ENCODE measurements at regions of chr12 and their contacts with region 1.

Region 1: DNA sequence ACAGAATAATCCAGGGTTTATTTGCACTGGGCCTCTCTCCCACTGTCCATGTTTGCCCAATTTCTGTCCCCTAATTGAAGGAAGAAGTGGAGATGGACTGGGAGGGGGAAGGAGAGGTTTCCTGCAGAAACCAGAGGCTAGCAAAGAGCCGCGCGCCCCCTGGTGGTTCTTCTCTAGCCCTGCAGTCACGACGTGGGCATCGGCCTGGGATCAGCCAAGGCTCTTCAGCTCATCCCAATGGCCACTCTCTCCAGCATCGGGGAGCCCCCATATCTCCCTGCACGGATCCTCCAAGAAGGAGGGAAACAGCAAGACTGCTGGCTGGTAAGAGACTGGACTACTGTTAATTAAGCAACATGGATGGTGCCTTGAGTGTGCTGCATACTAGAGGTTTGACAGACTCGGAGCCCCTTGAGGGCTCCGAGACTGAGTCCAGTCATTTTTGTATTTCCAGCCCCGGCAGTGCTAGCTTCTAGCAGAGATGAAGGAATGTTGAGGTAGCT is 18.7 kb downstream of the ZBTB39 start:
- DNase-seq: peak; percentile 58
- H3K4me3 ChIP-seq: no peak overlapping the region
- H3K27ac ChIP-seq: no peak overlapping the region
- H3K4me1 ChIP-seq: peaks cover 18% of the 10 kb centered on the region
- H3K27me3 ChIP-seq: no peaks in the 10 kb centered on the region
- CTCF ChIP-seq: peak; percentile 94 to 95

Region 2: DNA sequence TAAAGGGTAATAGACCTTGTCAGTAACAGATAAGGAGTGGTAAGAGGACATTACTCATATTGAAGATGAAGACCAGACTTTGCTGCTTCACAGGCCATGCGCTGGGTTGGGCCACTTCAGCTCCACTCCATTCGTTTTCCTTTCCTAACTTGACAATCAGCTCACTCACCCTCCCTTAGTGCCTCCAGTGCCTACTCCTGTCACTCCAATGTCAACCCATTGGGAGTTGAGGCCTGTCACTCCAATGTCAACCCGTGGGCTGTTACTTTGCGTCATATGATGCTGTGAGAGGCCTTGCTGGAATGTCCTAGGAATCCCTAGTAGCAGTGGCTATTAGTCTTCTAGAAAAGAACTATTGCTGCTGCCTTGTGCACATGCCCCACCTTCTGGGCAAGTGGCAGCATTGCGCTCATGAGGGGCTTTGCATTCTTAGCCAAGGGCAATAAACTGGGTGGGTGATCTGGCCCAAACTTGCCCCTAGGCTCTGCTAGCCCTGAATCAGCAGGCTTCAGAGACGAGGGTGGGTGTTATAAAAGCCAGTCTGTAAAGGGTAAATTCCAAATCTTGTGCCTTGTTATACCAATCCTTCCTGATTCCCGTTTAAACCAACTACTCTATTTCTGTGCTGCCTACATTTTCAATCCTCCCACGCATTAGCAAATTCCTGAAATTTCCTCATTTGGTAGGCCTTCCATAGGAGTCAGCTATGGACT is 393.5 kb before region 1 on chr12:
- CTCF ChIA-PET with region 1: no interaction called
- dilution Hi-C with region 1: no loop called
- in situ Hi-C with region 1: no loop called
- intact Hi-C with region 1: no loop called
- DNase-seq: peak; percentile 59
- H3K4me3 ChIP-seq: no peak overlapping the region
- H3K27ac ChIP-seq: peak overlapping the region; percentile 9
- H3K4me1 ChIP-seq: peaks cover 12% of the 10 kb centered on the region
- H3K27me3 ChIP-seq: no peaks in the 10 kb centered on the region
- CTCF ChIP-seq: peak; percentile 82 to 88

Region 3: DNA sequence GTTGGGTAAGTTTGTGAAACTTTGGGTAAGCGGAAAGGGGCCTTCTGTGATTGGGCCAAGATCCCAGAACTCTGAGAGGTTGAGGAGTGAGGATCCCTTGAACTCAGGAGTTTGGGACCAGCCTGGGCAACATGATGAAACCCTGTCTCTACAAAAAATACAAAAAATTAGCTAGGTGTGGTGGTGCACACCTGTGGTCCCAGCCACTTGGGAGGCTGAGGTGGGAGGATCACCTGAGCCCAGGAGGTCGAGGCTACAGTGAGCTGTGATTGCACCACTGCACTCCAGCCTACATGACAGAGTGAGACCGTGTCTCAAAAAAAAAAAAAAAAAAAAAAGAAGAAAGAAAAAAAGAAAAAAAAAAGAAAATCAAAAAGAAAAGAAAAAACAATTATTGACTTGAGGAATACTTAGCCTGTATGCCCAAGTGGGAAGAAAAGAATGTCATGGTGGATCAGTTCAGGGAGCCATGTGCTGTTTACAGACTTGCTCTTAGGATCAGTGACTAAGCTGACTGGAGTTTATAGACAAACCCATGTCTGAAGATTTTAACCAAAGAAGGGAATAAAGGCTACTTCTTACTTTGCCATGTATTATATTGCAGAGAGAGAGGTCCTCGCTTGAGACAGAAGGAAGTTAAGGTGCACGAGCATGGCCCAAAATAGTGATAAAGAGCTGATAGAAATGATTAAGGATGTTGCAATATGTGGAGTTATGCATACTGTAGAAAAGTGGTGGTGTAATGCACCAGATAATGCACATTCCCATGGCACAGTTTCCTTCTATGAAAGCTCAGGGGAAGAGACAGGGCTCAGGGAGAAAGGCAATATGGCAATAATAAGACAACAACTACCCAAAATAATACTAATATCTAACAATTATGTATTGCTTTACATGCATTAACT is 223.6 kb before region 1 on chr12:
- CTCF ChIA-PET with region 1: interaction called, 4 read pairs
- dilution Hi-C with region 1: loop called (anchors 5 kb)
- in situ Hi-C with region 1: loop called in 1 of 2 experiments (anchors 5 kb)
- intact Hi-C with region 1: loop called (anchors 1 kb)
- DNase-seq: no peak
- H3K4me3 ChIP-seq: no peak overlapping the region
- H3K27ac ChIP-seq: no peak overlapping the region
- H3K4me1 ChIP-seq: no peaks in the 10 kb centered on the region
- H3K27me3 ChIP-seq: no peaks in the 10 kb centered on the region
- CTCF ChIP-seq: no peak

Region 4: DNA sequence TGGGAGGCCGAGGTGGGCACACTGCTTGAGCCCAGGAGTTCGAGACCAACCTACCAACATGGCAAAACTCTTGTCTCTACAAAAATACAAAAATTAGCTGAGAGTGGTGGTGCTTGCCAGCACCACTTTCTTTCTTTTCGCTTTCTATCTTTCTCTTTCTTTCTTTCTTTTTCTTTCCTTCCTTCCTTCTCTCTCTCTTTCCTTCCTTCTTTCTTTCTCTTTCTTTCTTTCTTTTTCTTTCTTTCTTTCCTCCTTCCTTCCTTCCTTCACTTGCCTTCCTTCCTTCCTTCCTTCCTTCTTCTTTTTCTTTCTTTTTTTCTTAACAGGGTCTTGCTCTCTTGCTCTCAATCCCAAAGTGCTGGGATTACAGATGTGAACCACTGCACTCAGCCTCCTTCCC is 157.7 kb before region 1 on chr12:
- CTCF ChIA-PET with region 1: no interaction called
- dilution Hi-C with region 1: loop called (anchors 10 kb)
- in situ Hi-C with region 1: loop called (anchors 5 kb)
- intact Hi-C with region 1: no loop called
- DNase-seq: no peak
- H3K4me3 ChIP-seq: no peak overlapping the region
- H3K27ac ChIP-seq: no peak overlapping the region
- H3K4me1 ChIP-seq: no peaks in the 10 kb centered on the region
- H3K27me3 ChIP-seq: no peaks in the 10 kb centered on the region
- CTCF ChIP-seq: no peak

Region 5: DNA sequence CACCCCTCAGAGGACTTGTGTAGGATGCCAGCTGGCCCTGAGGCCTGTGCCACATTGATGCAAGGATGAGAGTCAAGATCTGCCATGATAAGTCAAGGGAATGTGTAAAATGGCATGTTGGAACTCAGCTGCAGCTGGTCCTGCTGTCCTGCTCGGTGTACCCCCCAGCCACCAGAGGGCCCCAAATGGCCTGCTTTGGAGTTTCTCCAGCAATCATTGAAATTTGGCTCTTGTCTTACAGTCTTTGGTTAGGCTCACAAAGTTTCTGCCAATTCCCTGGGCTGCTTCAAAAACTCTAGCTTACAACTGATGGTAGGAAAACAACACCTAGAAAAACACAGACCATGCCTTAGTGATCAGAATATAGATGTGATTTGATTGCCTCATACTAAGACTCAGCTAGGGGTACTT is 147.7 kb before region 1 on chr12:
- CTCF ChIA-PET with region 1: interaction called, 4 read pairs
- dilution Hi-C with region 1: no loop called
- in situ Hi-C with region 1: loop called (anchors 5 kb)
- intact Hi-C with region 1: loop called (anchors 1 kb)
- DNase-seq: peak; percentile 56
- H3K4me3 ChIP-seq: no peak overlapping the region
- H3K27ac ChIP-seq: no peak overlapping the region
- H3K4me1 ChIP-seq: peaks cover 34% of the 10 kb centered on the region
- H3K27me3 ChIP-seq: no peaks in the 10 kb centered on the region
- CTCF ChIP-seq: peak; percentile 77 to 85

Region 6: GRCh38 chr12:56900583-56900982 is 87.0 kb before region 1 on chr12:
- CTCF ChIA-PET with region 1: no interaction called
- dilution Hi-C with region 1: loop called (anchors 10 kb)
- in situ Hi-C with region 1: no loop called
- intact Hi-C with region 1: loop called (anchors 1 kb)
- DNase-seq: peak; percentile 97
- H3K4me3 ChIP-seq: no peak overlapping the region
- H3K27ac ChIP-seq: peak overlapping the region; percentile 72
- H3K4me1 ChIP-seq: peaks cover 45% of the 10 kb centered on the region
- H3K27me3 ChIP-seq: no peaks in the 10 kb centered on the region
- CTCF ChIP-seq: peak in 1 of 2 donors; percentile 38

Region 7: GRCh38 chr12:56947633-56948456 is 39.8 kb before region 1 on chr12:
- CTCF ChIA-PET with region 1: no interaction called
- dilution Hi-C with region 1: no loop called
- in situ Hi-C with region 1: no loop called
- intact Hi-C with region 1: loop called (anchors 1 kb)
- DNase-seq: no peak
- H3K4me3 ChIP-seq: no peak overlapping the region
- H3K27ac ChIP-seq: no peak overlapping the region
- H3K4me1 ChIP-seq: no peaks in the 10 kb centered on the region
- H3K27me3 ChIP-seq: no peaks in the 10 kb centered on the region
- CTCF ChIP-seq: no peak

Region 8: DNA sequence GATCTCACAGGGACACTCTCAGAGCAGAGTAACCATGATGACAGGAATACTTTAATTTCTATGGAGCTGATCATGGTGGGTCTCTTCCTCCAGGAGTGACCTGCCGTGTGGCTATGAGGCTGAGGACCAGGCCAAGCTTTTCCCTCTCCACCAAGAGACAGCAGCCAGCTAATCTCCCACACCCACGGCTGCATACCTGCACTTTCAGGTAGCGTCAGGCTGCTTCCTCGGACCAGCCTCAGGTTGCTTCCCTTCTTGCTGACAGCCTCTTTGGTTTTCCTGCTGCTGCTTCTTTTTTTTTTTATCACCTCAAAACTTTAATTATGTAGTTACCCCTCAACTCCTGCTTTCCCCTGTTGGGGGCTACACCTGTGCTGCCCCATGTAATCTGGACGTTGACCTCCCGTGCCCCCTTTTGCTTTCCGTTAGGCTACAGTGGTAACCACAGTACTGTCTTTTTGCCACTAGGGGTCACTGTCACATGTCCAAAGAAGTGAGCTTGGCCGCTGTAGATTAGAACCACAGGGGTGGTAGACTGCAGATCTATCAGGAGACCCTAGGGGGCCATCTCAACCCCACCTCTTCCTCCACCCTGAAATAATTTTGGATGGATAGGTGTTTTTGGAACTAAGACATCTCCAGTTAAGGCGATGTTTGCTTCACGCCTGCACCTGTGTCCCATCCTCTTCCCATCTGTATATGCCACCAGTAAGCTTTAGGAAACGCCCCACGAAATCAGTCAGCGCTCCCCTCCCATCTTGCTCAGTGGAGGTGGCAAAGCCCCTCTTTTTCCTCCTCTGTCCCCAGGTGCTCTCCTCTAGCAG is 595.6 kb after region 1 on chr12:
- CTCF ChIA-PET with region 1: no interaction called
- dilution Hi-C with region 1: no loop called
- in situ Hi-C with region 1: no loop called
- intact Hi-C with region 1: no loop called
- DNase-seq: peak; percentile 44
- H3K4me3 ChIP-seq: no peak overlapping the region
- H3K27ac ChIP-seq: no peak overlapping the region
- H3K4me1 ChIP-seq: no peaks in the 10 kb centered on the region
- H3K27me3 ChIP-seq: no peaks in the 10 kb centered on the region
- CTCF ChIP-seq: peak; percentile 93 to 95